CD8-positive, alpha-beta T cell (primary cell): ENCODE measurements at regions of chr1 and their contacts with region 1.

Region 1: DNA sequence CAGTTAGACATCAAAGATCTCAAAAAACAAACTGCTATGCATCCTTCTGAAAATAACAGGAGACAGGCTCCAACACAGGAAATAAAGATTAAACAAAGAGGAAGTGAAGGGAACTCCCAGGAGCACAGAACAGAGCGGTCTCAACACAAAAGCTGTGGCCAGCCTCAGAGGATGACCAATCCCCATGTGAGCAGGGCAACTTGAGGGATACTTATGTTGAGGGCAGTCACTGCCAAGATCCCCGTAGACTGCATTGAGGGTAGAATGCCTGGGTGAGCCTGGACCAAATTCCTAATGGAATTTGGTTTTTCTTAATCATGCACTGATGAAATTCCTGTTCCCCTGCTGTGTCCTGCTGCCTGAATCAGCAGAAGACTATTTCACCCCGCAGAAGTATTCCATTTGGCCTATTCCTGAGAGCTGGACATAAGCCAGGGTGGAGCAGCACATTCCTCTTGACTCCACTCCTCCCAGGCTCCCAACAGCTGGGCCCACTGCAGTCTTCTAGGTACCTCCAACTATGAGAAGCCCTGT is 49.0 kb downstream of the JAK1 start:
- DNase-seq: peak in 1 of 9 experiments; percentile 44
- ATAC-seq: no peak
- H3K4me3 ChIP-seq: no peak overlapping the region
- H3K4me3 Mint-ChIP-seq: peak overlapping the region; percentile 61
- H3K27ac ChIP-seq: no peak overlapping the region
- H3K27ac Mint-ChIP-seq: peak overlapping the region; percentile 10
- H3K4me1 ChIP-seq: peaks cover 83% of the 10 kb centered on the region
- H3K4me1 Mint-ChIP-seq: peaks cover 96% of the 10 kb centered on the region
- H3K27me3 ChIP-seq: no peaks in the 10 kb centered on the region
- H3K27me3 Mint-ChIP-seq: no peaks in the 10 kb centered on the region
- CTCF ChIP-seq: no peak

Region 2: DNA sequence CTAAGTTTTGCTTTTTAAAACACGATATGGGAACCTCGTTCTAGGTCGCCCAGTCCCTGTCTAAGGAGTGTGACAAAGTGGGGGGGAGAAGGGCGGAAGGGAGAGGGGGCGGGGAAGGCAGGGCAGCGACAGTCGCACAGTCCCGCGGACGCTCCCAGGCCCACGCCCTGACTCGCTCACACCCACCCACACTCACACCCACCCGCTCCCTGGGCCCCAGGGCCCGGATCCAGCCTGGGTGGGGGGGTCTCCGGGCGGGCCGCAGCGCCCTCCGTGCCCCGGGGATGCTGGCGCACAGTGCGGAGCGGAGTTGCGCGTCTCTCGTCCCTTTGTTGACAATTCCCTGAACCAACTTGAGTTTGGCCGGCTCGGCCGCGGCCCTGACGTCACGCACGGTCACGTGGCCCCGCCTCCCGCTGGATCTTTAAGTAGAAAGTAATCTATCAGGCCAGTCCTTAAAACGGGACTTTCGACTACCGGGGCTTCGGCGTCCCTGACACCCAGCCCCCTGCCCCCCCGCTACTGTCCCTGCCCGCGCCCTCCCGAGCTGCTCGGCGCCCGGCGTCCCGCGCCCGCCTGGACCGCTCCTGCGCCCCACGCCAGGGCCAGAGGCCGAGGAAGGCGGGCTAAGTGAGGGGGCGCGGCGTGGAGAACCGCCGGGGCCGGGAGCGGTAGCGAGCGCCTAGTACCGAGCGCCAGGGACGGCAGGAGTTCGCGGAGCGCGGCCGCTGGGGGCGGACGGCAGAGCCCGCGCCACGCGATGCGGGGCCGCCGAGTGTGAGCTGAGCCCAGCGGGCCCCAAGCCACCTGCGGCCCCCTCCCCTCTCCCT is 1595.1 kb before region 1 on chr1 and contains the start of gene FOXD3:
- CTCF ChIA-PET with region 1: no interaction called
- POLR2A ChIA-PET with region 1: no interaction called
- intact Hi-C with region 1: loop called in 1 of 2 experiments (anchors 5 kb)
- DNase-seq: peak in 2 of 9 experiments; percentile 33 to 41
- ATAC-seq: peak; percentile 30
- H3K4me3 ChIP-seq: peak within 1 kb of the TSS; percentile 40 to 54
- H3K4me3 Mint-ChIP-seq: peak within 1 kb of the TSS; percentile 81
- H3K27ac ChIP-seq: no peak within 1 kb of the TSS
- H3K27ac Mint-ChIP-seq: peak within 1 kb of the TSS; percentile 35
- H3K4me1 ChIP-seq: peaks cover 32% of the 10 kb centered on the region
- H3K4me1 Mint-ChIP-seq: peaks cover 42% of the 10 kb centered on the region
- H3K27me3 ChIP-seq: peaks cover 75 to 78% of the 10 kb centered on the region in 2 experiments
- H3K27me3 Mint-ChIP-seq: peaks cover 73% of the 10 kb centered on the region
- CTCF ChIP-seq: no peak
- total RNA-seq, gene FOXD3: not detected

Region 3: DNA sequence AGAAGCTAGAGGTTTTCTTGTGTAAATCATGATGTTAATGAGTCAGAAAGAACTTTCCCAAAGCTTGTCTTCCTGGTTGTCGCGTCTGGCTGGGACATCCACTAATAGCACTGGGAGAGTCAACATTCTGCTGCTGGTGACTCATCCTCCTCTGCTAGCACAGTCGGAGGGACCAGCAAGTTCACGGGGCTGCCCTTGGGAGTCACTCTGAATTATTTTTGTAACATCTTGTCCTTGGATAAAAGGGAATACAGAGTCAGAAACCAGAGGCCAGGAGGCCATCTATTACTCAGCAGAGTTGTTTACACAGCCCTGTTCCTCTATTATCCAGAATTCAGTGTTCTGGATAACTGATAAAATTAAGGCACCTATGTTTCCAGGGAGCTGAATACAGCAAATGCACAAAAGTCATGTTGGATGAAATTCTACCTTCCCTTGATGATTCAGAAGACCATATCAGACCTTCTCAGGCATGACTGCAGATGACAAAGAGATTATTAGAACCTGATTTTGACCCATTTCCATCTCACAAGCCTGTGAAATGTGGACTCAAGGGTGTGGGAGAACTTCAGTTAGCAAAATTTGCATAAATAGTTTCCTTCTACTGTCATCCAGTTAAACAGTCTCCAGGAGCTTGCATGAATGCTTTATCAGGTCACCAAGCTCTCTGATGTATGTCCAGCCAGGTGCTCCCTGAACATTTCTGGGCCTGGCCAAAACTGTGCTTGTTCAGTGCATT is 19.1 kb before region 1 on chr1:
- CTCF ChIA-PET with region 1: interaction called, 3 read pairs
- POLR2A ChIA-PET with region 1: interaction called, 4 read pairs
- intact Hi-C with region 1: loop called in 1 of 2 experiments (anchors 2 kb)
- DNase-seq: peak in 7 of 9 experiments; percentile 19 to 63 (median 38)
- ATAC-seq: peak; percentile 46
- H3K4me3 ChIP-seq: no peak overlapping the region
- H3K4me3 Mint-ChIP-seq: peak overlapping the region; percentile 8
- H3K27ac ChIP-seq: peak overlapping the region in 1 of 2 experiments; percentile 27
- H3K27ac Mint-ChIP-seq: no peak overlapping the region
- H3K4me1 ChIP-seq: peaks cover 63% of the 10 kb centered on the region
- H3K4me1 Mint-ChIP-seq: peaks cover 93% of the 10 kb centered on the region
- H3K27me3 ChIP-seq: no peaks in the 10 kb centered on the region
- H3K27me3 Mint-ChIP-seq: no peaks in the 10 kb centered on the region
- CTCF ChIP-seq: no peak

Region 4: GRCh38 chr1:64986903-64987871 is 69.8 kb after region 1 on chr1:
- CTCF ChIA-PET with region 1: no interaction called
- POLR2A ChIA-PET with region 1: no interaction called
- intact Hi-C with region 1: no loop called
- DNase-seq: no peak
- ATAC-seq: no peak
- H3K4me3 ChIP-seq: no peak overlapping the region
- H3K4me3 Mint-ChIP-seq: no peak overlapping the region
- H3K27ac ChIP-seq: no peak overlapping the region
- H3K27ac Mint-ChIP-seq: no peak overlapping the region
- H3K4me1 ChIP-seq: no peaks in the 10 kb centered on the region
- H3K4me1 Mint-ChIP-seq: peaks cover 7% of the 10 kb centered on the region
- H3K27me3 ChIP-seq: no peaks in the 10 kb centered on the region
- H3K27me3 Mint-ChIP-seq: no peaks in the 10 kb centered on the region
- CTCF ChIP-seq: no peak